CD8-positive, alpha-beta memory T cell (primary cell): ENCODE measurements at regions of chr11 and their contacts with region 1.

Region 1: GRCh38 chr11:27485930-27486773 is 13.6 kb upstream of the LGR4 start:
- DNase-seq: peak in 3 of 5 donors; percentile 7 to 41 (median 25)
- H3K4me3 ChIP-seq: no peak overlapping the region
- H3K4me3 Mint-ChIP-seq: no peak overlapping the region
- H3K27ac ChIP-seq: no peak overlapping the region
- H3K27ac Mint-ChIP-seq: no peak overlapping the region
- H3K4me1 ChIP-seq: no peaks in the 10 kb centered on the region
- H3K4me1 Mint-ChIP-seq: no peaks in the 10 kb centered on the region
- H3K27me3 ChIP-seq: no peaks in the 10 kb centered on the region
- H3K27me3 Mint-ChIP-seq: no peaks in the 10 kb centered on the region

Region 2: GRCh38 chr11:27401833-27402316 is 84.3 kb before region 1 on chr11:
- CTCF ChIA-PET with region 1: no interaction called
- POLR2A ChIA-PET with region 1: no interaction called
- DNase-seq: no peak
- H3K4me3 ChIP-seq: no peak overlapping the region
- H3K4me3 Mint-ChIP-seq: no peak overlapping the region
- H3K27ac ChIP-seq: no peak overlapping the region
- H3K27ac Mint-ChIP-seq: no peak overlapping the region
- H3K4me1 ChIP-seq: no peaks in the 10 kb centered on the region
- H3K4me1 Mint-ChIP-seq: no peaks in the 10 kb centered on the region
- H3K27me3 ChIP-seq: no peaks in the 10 kb centered on the region
- H3K27me3 Mint-ChIP-seq: peaks cover 5 to 7% of the 10 kb centered on the region in 2 donors

Region 3: GRCh38 chr11:27497284-27497866 is 11.2 kb after region 1 on chr11:
- CTCF ChIA-PET with region 1: interaction called, 47 read pairs
- POLR2A ChIA-PET with region 1: interaction called, 7 read pairs
- DNase-seq: no peak
- H3K4me3 ChIP-seq: no peak overlapping the region
- H3K4me3 Mint-ChIP-seq: no peak overlapping the region
- H3K27ac ChIP-seq: no peak overlapping the region
- H3K27ac Mint-ChIP-seq: peak overlapping the region in 2 of 8 donors; percentile 26 to 55
- H3K4me1 ChIP-seq: no peaks in the 10 kb centered on the region
- H3K4me1 Mint-ChIP-seq: peaks cover 24 to 39% (median 33%) of the 10 kb centered on the region in 3 donors
- H3K27me3 ChIP-seq: no peaks in the 10 kb centered on the region
- H3K27me3 Mint-ChIP-seq: no peaks in the 10 kb centered on the region

Region 4: DNA sequence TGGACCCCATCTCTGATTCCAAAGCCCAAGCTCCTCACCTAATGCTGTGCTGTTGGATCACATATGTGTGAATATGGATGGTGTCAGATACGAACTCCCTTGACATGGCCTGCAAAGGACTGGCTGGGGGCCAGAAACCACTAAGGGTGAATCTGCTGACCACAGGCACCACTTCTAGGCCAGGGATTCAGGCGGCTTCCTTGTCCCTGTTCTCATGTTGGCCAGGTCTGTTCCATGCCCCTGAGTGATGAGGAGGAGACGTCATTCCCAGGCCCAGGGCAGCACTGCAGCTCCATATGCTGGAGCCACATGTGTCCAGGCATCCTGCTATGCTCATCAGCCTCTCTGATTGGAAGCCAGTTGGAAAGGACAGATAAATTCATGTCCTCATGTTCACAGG is 344.1 kb after region 1 on chr11:
- CTCF ChIA-PET with region 1: no interaction called
- POLR2A ChIA-PET with region 1: no interaction called
- DNase-seq: no peak
- H3K4me3 ChIP-seq: no peak overlapping the region
- H3K4me3 Mint-ChIP-seq: no peak overlapping the region
- H3K27ac ChIP-seq: no peak overlapping the region
- H3K27ac Mint-ChIP-seq: no peak overlapping the region
- H3K4me1 ChIP-seq: no peaks in the 10 kb centered on the region
- H3K4me1 Mint-ChIP-seq: no peaks in the 10 kb centered on the region
- H3K27me3 ChIP-seq: no peaks in the 10 kb centered on the region
- H3K27me3 Mint-ChIP-seq: peaks cover 2 to 5% of the 10 kb centered on the region in 2 donors